MCF 10A (cell line): ENCODE measurements at regions of chr13 and their contacts with region 1.

Region 1: DNA sequence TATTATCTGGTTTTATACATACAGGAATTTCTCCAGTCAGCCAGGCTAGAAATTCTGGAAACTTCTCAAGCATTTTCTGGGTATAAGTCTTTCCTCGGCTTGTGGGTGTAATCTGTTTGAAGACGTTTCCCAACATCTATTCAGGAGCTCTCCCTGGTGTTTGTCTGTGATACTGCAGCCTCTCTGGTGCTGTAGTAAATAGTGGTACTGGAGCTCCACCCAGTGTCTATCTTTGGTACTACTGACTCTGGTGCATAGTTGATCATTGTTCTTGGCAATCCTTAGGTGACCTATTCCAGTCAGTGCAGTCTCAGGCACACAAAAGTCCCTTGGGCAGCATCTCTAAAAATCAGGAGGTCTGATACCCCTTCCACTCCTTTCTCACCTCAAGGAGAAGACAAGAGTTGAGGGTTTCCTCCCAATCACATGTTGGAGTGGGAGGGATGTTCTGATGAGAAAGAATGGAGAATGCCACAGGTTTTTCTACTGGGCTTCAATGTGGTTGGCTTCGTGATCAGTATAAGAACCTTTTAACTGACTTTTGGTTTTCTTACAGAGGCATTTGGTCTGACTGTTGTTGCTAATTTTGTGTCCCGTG is 115.5 kb downstream of the CYSLTR2 start:
- DNase-seq: peak; percentile 90
- H3K4me3 Mint-ChIP-seq: no peak overlapping the region
- H3K27ac Mint-ChIP-seq: no peak overlapping the region
- H3K4me1 Mint-ChIP-seq: peaks cover 7% of the 10 kb centered on the region
- H3K27me3 Mint-ChIP-seq: no peaks in the 10 kb centered on the region
- CTCF ChIP-seq: peak; percentile 100

Region 2: GRCh38 chr13:46831588-46832194 is 1937.5 kb before region 1 on chr13:
- CTCF ChIA-PET with region 1: no interaction called
- POLR2A ChIA-PET with region 1: no interaction called
- intact Hi-C with region 1: loop called (anchors 5 kb)
- DNase-seq: peak; percentile 62
- H3K4me3 Mint-ChIP-seq: no peak overlapping the region
- H3K27ac Mint-ChIP-seq: no peak overlapping the region
- H3K4me1 Mint-ChIP-seq: no peaks in the 10 kb centered on the region
- H3K27me3 Mint-ChIP-seq: no peaks in the 10 kb centered on the region
- CTCF ChIP-seq: peak; percentile 88

Region 3: DNA sequence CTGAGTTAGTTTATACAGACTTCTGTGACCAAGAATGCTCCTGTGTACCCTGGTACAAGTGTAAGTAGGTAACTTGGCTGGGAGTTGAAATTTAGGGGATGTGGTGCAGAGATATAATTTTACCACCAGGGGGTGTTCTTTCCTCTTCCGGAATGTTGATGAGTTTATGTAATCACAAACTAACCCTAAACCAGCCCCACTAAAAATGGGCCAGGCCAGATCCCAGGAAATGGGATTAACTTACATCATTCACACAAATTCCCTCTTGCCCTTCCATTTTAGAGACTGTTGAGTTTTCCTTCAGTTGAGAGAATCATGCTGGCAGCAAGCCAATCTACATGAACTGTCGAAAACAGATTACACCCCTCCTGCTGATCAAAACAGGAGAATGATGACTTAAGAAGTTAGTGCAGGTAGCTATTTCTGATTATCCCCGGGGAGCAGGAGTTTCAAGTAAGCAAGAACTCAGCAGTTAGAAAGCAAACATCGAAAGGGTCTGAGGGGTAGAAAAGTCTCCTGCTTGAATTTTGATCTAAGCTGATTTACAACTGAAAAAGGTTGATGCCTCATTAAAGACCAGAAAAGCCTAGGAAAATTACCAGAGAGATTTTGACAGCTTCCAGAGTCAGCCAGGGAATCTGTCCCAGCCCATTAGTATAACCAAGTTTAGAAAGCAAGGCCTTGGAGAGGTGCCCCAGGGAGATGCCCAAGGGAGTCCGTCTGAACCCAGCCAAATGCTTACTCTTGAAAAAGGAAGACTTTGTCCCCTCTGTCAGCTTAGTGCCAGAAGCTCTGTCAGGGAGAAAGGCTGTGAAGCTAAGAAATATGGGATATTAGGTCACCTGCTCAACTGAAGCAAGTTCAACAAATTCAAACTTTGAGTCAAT is 642.0 kb before region 1 on chr13:
- CTCF ChIA-PET with region 1: interaction called, 4 read pairs
- POLR2A ChIA-PET with region 1: interaction called, 3 read pairs
- intact Hi-C with region 1: loop called (anchors 10 kb)
- DNase-seq: peak; percentile 82
- H3K4me3 Mint-ChIP-seq: no peak overlapping the region
- H3K27ac Mint-ChIP-seq: peak overlapping the region; percentile 64
- H3K4me1 Mint-ChIP-seq: peaks cover 21% of the 10 kb centered on the region
- H3K27me3 Mint-ChIP-seq: no peaks in the 10 kb centered on the region
- CTCF ChIP-seq: peak; percentile 64

Region 4: GRCh38 chr13:48595431-48596429 is 173.5 kb before region 1 on chr13:
- CTCF ChIA-PET with region 1: interaction called, 169 read pairs
- POLR2A ChIA-PET with region 1: interaction called, 4 read pairs
- intact Hi-C with region 1: loop called (anchors 1 kb)
- DNase-seq: peak; percentile 70
- H3K4me3 Mint-ChIP-seq: no peak overlapping the region
- H3K27ac Mint-ChIP-seq: no peak overlapping the region
- H3K4me1 Mint-ChIP-seq: no peaks in the 10 kb centered on the region
- H3K27me3 Mint-ChIP-seq: no peaks in the 10 kb centered on the region
- CTCF ChIP-seq: peak; percentile 66

Region 5: GRCh38 chr13:48749699-48750473 is 19.3 kb before region 1 on chr13:
- CTCF ChIA-PET with region 1: interaction called, 58 read pairs
- POLR2A ChIA-PET with region 1: interaction called, 3 read pairs
- intact Hi-C with region 1: loop called (anchors 1 kb)
- DNase-seq: peak; percentile 99
- H3K4me3 Mint-ChIP-seq: peak overlapping the region; percentile 17
- H3K27ac Mint-ChIP-seq: peak overlapping the region; percentile 68
- H3K4me1 Mint-ChIP-seq: peaks cover 6% of the 10 kb centered on the region
- H3K27me3 Mint-ChIP-seq: no peaks in the 10 kb centered on the region
- CTCF ChIP-seq: peak; percentile 45

Region 6: DNA sequence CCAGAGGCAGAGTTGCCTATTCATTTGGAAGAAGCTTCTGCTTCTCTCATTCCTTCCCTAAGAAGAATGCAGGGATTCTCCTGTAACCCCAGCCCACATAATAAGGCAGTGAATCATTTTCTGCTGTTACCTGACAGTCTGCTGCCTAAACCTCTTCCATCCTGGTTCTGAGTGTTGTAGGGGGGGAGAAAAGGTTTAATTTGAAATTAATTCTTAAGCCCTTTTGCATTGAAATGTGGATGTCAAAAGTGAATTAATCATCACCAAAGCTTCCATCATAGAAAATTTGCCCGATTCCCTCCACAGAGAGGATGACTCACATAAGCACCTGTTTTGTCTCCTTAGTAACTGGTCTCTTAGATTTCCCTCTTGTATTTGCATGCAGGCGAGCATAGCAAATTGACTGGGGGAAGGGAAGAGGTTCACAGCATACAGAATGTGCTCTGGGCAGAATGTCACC is 59.8 kb after region 1 on chr13:
- CTCF ChIA-PET with region 1: no interaction called
- POLR2A ChIA-PET with region 1: no interaction called
- intact Hi-C with region 1: no loop called
- DNase-seq: peak; percentile 44
- H3K4me3 Mint-ChIP-seq: no peak overlapping the region
- H3K27ac Mint-ChIP-seq: no peak overlapping the region
- H3K4me1 Mint-ChIP-seq: peaks cover 8% of the 10 kb centered on the region
- H3K27me3 Mint-ChIP-seq: no peaks in the 10 kb centered on the region
- CTCF ChIP-seq: no peak

Region 7: DNA sequence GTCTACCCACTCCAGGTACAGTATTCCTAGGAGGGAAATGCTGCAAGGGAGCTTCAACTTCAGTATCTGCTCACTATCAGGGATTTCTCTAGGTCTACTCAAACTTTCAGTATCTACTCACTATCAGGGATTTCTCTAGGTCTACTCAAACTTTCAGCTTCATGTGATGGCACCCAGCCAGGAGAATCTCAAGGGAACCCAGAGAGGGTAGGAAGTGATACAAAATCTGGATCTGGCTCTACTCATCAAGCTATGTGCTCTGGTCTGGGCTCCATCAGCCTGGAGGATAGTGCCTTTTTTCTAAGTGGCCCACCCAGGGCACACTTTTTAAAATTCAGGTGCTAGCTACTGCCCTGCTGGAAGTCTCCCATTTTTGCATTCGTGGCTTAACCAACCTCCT is 154.2 kb after region 1 on chr13:
- CTCF ChIA-PET with region 1: no interaction called
- POLR2A ChIA-PET with region 1: no interaction called
- intact Hi-C with region 1: no loop called
- DNase-seq: no peak
- H3K4me3 Mint-ChIP-seq: no peak overlapping the region
- H3K27ac Mint-ChIP-seq: no peak overlapping the region
- H3K4me1 Mint-ChIP-seq: no peaks in the 10 kb centered on the region
- H3K27me3 Mint-ChIP-seq: no peaks in the 10 kb centered on the region
- CTCF ChIP-seq: no peak

Region 8: DNA sequence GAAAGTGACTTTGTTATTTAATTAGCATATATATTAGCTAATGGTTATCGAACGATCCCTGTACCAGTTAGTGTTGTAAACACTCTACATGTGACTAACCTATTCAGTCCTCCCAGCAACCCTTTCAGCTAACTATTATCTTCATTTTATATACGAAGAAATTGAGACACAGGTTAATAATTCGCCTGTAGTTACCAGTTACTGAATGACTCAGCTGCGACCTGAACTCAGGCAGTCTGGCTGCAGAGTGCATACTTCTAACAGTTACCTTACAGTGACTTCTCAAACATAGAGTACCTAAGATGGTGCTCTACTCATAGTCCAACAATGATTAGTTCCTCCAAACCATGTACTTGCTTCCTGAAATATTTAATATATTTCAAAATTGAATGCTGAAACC is 324.2 kb after region 1 on chr13:
- CTCF ChIA-PET with region 1: no interaction called
- POLR2A ChIA-PET with region 1: no interaction called
- intact Hi-C with region 1: no loop called
- DNase-seq: no peak
- H3K4me3 Mint-ChIP-seq: no peak overlapping the region
- H3K27ac Mint-ChIP-seq: no peak overlapping the region
- H3K4me1 Mint-ChIP-seq: peaks cover 26% of the 10 kb centered on the region
- H3K27me3 Mint-ChIP-seq: no peaks in the 10 kb centered on the region
- CTCF ChIP-seq: no peak